GM12878 (cell line): ENCODE measurements at regions of chr3 and their contacts with region 1.

Region 1: DNA sequence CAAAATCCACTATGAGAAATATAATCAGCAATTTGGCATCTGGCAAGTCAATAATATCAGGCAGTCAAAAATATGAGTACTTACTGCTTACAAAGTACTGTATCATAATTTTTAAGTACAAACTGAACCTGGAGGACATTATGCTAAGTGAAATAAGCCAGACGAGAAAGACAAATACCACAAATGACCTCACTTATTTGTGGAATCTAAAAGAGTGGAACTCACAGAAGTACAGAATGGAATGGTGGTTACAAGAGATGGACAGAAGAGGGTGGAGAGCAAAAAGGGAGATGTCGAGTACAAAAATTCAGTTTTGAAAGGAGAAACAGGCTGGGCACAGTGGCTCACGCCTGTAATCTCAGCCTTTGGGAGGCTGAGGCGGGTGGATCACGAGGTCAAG is 12.4 kb downstream of the PCYT1A start:
- DNase-seq: no peak
- ATAC-seq: peak; percentile 9
- H3K4me3 ChIP-seq: peak overlapping the region; percentile 13; the same call in 1 of the 2 replicates
- H3K27ac ChIP-seq: peak overlapping the region; percentile 63
- H3K4me1 ChIP-seq: peaks cover 44% of the 10 kb centered on the region
- H3K27me3 ChIP-seq: no peaks in the 10 kb centered on the region
- CTCF ChIP-seq: no peak
- EP300 ChIP-seq: no peak
- POLR2A ChIP-seq: no peak
- RAD21 ChIP-seq: no peak

Region 2: DNA sequence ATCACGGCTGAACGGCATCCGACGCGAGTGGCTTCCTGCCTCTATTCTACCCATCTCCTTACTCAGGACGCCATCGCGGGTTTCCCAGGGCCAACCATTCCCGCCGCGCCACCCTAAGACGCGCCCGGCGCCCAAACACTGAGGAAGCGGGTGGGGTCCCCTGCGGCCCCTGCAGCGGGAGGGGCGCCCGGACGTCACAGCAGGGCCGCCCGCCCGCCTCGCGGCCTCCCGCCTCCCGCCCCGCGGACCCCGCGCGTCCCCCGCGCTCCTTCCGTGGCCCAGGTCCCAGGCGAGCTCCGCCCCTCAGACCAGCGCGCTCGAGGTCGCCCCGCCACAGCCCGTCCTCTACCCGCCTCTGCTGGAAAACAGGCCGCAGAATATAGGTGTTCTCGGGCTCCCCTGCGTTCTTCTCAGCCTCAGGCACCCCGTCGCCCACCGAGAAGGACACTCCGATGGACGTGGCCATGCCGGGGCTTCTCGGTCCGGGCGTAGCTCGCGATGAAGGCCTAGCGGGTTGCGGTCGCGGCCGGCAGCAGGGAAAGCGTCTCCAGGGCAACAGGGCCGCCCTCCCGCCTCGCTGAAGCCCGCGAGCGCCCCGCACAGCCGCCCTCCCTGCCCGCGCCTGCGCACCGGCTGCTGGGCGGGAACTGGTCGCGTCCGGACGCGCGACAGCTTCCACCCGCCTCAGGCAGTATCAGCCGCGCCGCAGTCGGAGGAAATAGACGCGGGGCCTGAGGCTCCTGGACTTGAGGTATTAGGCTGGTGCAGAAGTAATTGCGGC is 42.8 kb after region 1 on chr3 and contains the start of gene DYNLT2B:
- CTCF ChIA-PET with region 1: interaction called, 7 read pairs
- POLR2A ChIA-PET with region 1: no interaction called
- RAD21 ChIA-PET with region 1: interaction called, 3 read pairs
- SMC1A ChIA-PET with region 1: interaction called, 3 read pairs
- in situ Hi-C with region 1: no loop called
- intact Hi-C with region 1: loop called (anchors 5 kb)
- DNase-seq: peak; percentile 67
- ATAC-seq: peak; percentile 97
- H3K4me3 ChIP-seq: peak within 1 kb of the TSS; percentile 97
- H3K27ac ChIP-seq: peak within 1 kb of the TSS; percentile 83
- H3K4me1 ChIP-seq: no peaks in the 10 kb centered on the region
- H3K27me3 ChIP-seq: no peaks in the 10 kb centered on the region
- CTCF ChIP-seq: peak in 1 of 3 experiments; percentile 45; a peak in 2 of 6 replicates
- EP300 ChIP-seq: no peak
- POLR2A ChIP-seq: peak; percentile 88
- RAD21 ChIP-seq: no peak
- polyA plus RNA-seq, gene DYNLT2B: 24.2 to 39.6 TPM

Region 3: DNA sequence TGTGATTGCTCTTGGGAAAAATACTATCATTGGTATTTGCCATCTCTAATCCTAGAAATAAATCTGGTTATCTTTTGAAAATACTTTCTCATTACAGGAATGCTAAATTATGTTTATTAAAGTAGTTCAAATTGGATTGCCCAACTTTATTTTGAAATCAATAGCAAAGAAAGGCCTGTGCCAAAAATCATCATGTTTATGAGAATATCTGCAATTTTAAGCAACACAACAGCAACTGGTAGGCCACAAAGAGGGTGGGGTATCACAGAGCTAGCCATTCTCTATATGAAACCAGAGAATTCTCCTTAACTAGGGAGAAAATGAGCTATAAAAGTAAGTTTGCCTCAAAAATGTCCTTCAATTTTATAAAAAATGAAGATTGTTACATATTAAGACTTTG is 74.9 kb after region 1 on chr3:
- CTCF ChIA-PET with region 1: no interaction called
- POLR2A ChIA-PET with region 1: no interaction called
- RAD21 ChIA-PET with region 1: no interaction called
- SMC1A ChIA-PET with region 1: no interaction called
- in situ Hi-C with region 1: no loop called
- intact Hi-C with region 1: no loop called
- DNase-seq: no peak
- ATAC-seq: no peak
- H3K4me3 ChIP-seq: no peak overlapping the region
- H3K27ac ChIP-seq: no peak overlapping the region
- H3K4me1 ChIP-seq: peaks cover 1% of the 10 kb centered on the region; the same call in 1 of the 2 replicates
- H3K27me3 ChIP-seq: no peaks in the 10 kb centered on the region
- CTCF ChIP-seq: no peak
- EP300 ChIP-seq: no peak
- POLR2A ChIP-seq: no peak
- RAD21 ChIP-seq: no peak